ENCODE measurements at regions of chr6 and their contacts with region 1.

Region 1: DNA sequence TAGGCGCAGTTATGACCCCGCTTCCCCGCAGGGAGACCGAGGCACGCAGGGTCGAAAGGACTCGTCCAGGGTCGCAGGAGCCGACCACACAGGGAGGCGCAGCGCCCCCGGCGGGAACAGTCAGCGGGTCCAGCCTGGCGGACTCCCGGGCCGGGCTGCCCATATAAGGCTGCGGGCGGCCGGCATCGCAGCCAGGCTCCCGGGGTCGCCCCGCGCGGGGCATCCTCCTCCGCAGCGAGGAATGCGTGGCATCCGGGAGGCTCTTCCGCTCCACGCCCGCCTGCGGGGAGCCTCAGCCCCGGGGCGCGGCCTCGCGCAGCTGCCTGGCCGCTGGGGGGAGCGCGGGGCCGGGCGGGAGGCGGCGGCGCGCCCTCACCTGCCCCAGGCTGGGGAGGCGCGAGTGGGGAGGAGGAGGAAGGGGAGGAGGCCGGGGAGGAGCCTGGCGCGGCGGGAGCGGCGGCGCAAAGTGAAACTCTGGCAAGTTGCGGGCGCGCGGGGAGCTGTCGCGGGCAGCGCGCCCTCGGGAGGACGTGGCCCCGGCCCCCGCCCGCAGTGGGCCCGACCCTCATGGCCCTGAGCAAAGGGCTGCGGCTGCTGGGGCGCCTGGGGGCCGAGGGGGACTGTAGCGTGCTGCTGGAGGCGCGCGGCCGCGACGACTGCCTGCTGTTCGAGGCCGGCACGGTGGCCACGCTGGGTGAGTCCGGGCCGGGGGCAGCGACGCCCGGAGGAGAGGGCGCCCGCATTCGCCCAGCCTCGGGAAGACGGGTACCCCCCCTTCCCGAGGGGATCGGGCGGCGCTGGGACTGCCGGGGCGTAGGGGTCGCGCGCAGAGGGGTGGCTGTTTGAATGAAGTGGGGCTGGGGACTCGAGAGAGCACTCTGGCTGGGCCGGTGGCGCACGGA is at the start of gene SYNJ2:
- DNase-seq: peak; percentile 44 to 60
- ATAC-seq: peak; percentile 88 to 90
- H3K4me3 ChIP-seq: peak within 1 kb of the TSS; percentile 71 to 93 (median 88)
- H3K27ac ChIP-seq: peak within 1 kb of the TSS; percentile 54 to 78 (median 66)
- H3K4me1 ChIP-seq: peaks cover 0 to 7% of the 10 kb centered on the region in 2 donors
- H3K27me3 ChIP-seq: no peaks in the 10 kb centered on the region
- CTCF ChIP-seq: peak in 4 of 5 experiments; percentile 43 to 72 (median 68)
- POLR2A ChIP-seq: peak; percentile 46 to 71
- total RNA-seq, gene SYNJ2: 3.9 to 17.0 (median 7.0) TPM

Region 2: GRCh38 chr6:157823001-157823527 is 158.6 kb before region 1 on chr6 and contains the start of gene SNX9:
- in situ Hi-C with region 1: no loop called
- intact Hi-C with region 1: loop called (anchors 5 kb)
- DNase-seq: peak; percentile 56 to 68
- ATAC-seq: peak; percentile 86 to 90
- H3K4me3 ChIP-seq: peak within 1 kb of the TSS; percentile 80 to 97 (median 88)
- H3K27ac ChIP-seq: peak within 1 kb of the TSS; percentile 82 to 96 (median 90)
- H3K4me1 ChIP-seq: peaks cover 15 to 34% of the 10 kb centered on the region in 2 donors
- H3K27me3 ChIP-seq: no peaks in the 10 kb centered on the region
- CTCF ChIP-seq: peak in 1 of 5 experiments; percentile 37
- POLR2A ChIP-seq: peak; percentile 73 to 82
- total RNA-seq, gene SNX9: 29.4 to 44.9 (median 33.3) TPM

Region 3: DNA sequence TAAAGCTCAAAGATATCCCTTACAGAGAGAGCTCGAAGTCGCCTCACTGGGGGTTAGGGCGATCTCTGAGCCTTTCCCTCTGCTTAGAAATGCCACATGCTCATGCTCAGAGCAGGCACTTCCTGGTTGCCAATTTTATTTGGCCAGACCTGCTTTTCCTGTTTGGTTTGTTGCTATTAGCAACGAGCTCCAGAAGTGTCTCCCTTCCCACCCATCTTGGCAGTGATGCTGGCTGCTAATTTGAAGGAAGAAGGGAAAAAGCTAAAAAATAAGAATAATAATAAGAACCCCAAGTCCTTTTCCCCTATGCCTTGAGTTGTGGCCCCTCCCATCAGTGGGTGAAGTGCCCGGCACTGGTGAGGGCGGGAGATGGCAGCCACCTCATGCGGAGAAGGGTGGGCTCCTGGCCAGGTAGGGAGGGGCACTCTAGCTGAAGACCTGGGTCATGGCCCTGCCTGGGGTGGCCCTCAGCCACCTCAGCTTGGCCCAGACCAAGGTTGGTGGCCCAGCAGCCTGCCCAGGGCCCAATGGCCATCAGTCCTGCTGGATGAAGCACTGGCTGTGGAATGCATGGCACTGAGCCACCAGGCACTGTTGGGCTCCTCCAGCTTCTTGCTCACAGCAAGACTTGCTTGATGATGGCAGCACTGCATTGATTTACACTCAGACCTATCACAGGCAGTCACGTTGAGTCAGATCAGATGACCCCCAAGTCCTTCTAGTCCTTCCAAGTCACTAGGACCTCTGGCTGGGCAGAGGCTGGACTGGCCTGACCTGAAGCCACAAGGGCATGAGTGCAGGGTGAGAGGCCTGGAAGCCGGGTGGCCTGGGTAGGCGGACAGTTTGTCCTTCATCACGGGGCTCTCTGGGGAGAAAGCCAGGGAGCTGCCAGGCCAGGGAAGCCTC is 79.1 kb after region 1 on chr6:
- in situ Hi-C with region 1: loop called in 1 of 4 experiments (anchors 10 kb)
- intact Hi-C with region 1: no loop called
- DNase-seq: peak; percentile 78 to 88
- ATAC-seq: peak; percentile 85 to 87
- H3K4me3 ChIP-seq: peak overlapping the region in 2 of 4 donors; percentile 17 to 33
- H3K27ac ChIP-seq: peak overlapping the region; percentile 71 to 87 (median 80)
- H3K4me1 ChIP-seq: peaks cover 13 to 16% of the 10 kb centered on the region in 2 donors
- H3K27me3 ChIP-seq: no peaks in the 10 kb centered on the region
- CTCF ChIP-seq: no peak
- POLR2A ChIP-seq: peak; percentile 15

Region 4: DNA sequence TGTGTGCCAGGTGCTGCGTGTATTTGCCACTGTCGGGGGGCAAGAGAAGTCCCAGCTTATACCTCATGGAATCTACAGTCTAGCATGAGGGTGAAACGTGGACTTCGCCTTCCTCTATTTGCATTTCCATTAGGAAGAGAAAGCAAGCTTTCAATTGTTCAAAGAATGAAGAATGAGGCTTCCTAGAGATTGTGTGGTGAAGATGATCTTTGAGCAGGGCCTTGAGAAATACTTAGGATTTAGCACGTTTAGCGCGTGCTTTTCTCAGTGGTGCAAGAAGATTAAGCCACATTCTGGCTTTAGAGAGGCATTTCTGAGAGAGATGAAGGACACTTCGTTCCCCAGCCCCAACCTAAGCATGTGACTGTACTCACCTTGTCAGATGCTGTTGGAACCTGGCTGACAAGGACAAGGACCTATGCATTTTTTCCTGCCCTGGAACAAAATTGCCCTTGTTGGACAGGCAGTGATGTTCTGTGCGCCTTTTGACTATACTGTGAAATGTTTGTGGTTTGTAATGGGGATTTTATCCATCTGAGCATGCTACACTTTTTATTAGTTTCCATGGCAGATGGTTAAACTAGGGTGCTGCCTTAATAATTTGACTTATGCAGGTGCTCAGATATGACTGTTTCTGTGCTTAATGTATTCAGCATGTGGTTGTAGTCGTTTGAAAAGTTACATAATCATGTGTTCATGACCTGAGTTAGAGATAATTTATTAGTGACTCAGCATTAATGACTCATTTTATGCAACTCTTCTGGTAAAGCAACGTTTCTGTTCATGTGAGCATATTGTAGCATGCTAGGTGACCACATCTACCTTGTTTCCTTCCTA is 341.3 kb after region 1 on chr6:
- in situ Hi-C with region 1: no loop called
- intact Hi-C with region 1: no loop called
- DNase-seq: no peak
- ATAC-seq: peak in 1 of 2 donors; percentile 59
- H3K4me3 ChIP-seq: no peak overlapping the region
- H3K27ac ChIP-seq: no peak overlapping the region
- H3K4me1 ChIP-seq: peaks cover 12 to 47% of the 10 kb centered on the region in 2 donors
- H3K27me3 ChIP-seq: no peaks in the 10 kb centered on the region
- CTCF ChIP-seq: no peak
- POLR2A ChIP-seq: no peak